H1 (cell line): ENCODE measurements at regions of chr19 and their contacts with region 1.

Region 1: DNA sequence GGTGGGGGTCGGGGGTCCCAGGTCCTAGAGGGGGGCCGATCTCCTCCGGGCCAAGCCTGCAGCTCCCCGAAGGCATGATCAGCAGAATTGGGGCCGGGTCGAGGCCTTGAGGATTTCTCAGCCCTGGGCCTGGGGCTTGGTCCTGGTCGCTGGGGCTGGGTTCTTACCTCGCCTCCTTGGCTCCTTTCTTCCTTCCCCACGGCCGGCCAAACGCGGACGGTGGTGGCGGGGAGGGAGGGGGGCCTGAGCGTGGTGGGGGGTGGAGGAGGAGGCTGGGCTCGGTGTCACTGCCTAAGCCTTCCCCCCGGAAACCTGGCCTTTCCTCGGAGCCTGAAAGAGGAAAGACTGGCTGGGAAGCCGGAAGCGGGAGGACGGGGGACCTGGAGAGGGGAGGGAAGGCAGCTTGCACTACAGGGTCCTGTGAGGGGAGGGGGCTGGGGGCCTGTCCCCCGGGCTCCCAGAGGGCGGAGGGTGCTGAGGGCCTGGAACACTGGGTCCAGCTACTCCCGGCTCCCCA is at the start of gene ZNF579:
- DNase-seq: peak in 1 of 2 experiments; percentile 90
- H3K4me3 ChIP-seq: peak within 1 kb of the TSS; percentile 73 to 92 (median 74)
- H3K27ac ChIP-seq: peak within 1 kb of the TSS; percentile 81; the same call in 1 of the 2 replicates
- H3K4me1 ChIP-seq: peaks cover 0 to 2% (median 0%) of the 10 kb centered on the region in 4 experiments; a peak in 3 of 7 replicates
- H3K27me3 ChIP-seq: no peaks in the 10 kb centered on the region
- CTCF ChIP-seq: no peak
- EP300 ChIP-seq: peak in 1 of 2 experiments; percentile 74; a peak in 1 of 3 replicates
- POLR2A ChIP-seq: no peak
- RAD21 ChIP-seq: no peak
- total RNA-seq, gene ZNF579: 18.9 and 19.0 TPM in 2 replicates

Region 2: DNA sequence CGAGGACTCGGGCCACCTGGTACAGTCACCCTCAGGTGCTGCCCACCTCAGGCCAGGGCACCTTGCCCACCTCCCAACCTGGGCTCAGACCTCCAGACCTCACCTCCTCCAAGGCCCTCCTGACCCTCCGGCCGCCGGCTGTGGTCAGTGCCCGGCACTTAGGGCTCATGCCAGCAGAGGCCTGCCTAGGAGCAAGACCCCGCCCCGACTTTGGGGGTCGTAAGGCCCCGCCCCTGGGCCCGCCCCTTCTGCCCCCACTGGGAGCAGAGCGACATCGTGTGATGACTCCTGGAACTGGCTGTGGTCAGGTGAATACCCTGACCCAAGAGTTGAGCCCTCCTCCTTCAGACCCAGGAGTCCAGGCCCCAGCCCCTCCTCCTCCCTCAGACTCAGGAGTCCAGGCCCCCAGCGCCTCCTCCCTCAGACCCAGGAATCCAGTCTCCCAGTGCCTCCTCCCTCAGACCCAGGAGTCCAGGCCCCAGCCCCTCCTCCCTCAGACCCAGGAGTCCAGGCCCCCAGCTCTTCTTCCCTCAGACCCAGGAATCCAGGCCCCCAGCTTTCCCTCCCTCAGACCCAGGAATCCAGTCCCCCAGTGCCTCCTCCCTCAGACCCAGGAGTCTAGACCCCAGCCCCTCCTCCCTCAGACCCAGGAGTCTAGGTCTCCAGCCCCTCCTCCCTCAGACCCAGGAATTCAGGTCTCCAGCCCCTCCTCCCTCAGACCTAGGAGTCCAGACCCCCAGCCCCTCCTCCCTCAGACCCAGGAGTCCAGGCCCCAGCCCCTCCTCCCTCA is 43.5 kb before region 1 on chr19 and contains the start of gene SBK2:
- CTCF ChIA-PET with region 1: no interaction called
- POLR2A ChIA-PET with region 1: no interaction called
- DNase-seq: peak; percentile 62 to 98
- H3K4me3 ChIP-seq: peak within 1 kb of the TSS; percentile 12 to 58 (median 29); a peak in 5 of 8 replicates
- H3K27ac ChIP-seq: peak within 1 kb of the TSS; percentile 51; the same call in 1 of the 2 replicates
- H3K4me1 ChIP-seq: peaks cover 0 to 17% (median 5%) of the 10 kb centered on the region in 4 experiments; a peak in 4 of 7 replicates
- H3K27me3 ChIP-seq: no peaks in the 10 kb centered on the region; a peak in 2 of 7 replicates
- CTCF ChIP-seq: peak; percentile 75 to 88 (median 84)
- EP300 ChIP-seq: no peak
- POLR2A ChIP-seq: 0 out of 3 replicates have a peak, but pooled peaks of 1 of the 2 experiments have one; percentile 21
- RAD21 ChIP-seq: peak; percentile 86 to 88
- total RNA-seq, gene SBK2: 3.9 and 4.1 TPM in 2 replicates

Region 3: DNA sequence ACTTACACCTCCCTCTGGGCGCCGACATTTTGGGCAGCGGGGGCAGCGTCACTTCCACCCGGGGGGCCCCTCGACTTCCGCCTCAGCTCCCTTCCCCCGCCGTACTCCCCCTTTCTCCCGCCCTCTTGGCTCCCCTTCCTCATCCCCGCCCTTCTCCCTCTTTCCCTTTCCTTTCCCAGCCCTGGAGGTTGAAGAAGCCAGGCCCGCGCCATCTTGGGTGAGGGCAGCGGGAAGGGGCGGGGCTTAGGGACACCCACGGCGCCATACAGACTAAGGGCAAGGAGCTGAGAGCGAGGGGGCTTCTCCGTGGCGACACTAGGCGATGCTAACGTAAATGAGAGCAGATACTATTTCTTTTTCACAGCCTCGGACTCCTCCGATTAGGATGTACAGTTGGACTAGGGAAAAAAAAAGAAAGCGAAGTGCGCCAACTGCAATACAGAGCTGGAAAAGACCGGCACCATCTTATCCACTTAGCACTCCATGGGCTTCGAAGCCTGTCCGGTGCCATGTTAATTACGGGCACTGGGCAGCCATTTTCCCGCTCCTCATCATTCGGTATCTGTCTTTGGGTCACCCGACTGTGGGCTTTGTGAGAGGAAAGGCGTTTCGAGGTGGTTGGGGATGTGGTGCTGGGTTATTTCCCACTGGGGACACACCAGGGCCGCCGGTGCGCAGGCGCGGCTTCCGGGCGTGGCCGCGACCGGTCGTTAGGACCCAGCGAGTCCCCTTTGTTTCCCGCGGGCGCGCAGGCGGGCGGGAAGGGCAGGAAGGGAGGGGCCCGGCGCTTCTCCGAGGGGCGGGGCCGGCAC is 19.0 kb after region 1 on chr19 and contains the start of gene FIZ1:
- CTCF ChIA-PET with region 1: interaction called, 3 read pairs
- POLR2A ChIA-PET with region 1: interaction called, 42 read pairs
- DNase-seq: peak; percentile 93 to 97
- H3K4me3 ChIP-seq: peak within 1 kb of the TSS; percentile 78 to 95 (median 86)
- H3K27ac ChIP-seq: peak within 1 kb of the TSS; percentile 100
- H3K4me1 ChIP-seq: peaks cover 0 to 14% (median 7%) of the 10 kb centered on the region in 4 experiments; a peak in 5 of 7 replicates
- H3K27me3 ChIP-seq: no peaks in the 10 kb centered on the region
- CTCF ChIP-seq: no peak
- EP300 ChIP-seq: 0 out of 3 replicates have a peak, but pooled peaks of 1 of the 2 experiments have one; percentile 41
- POLR2A ChIP-seq: peak in 1 of 2 experiments; percentile 81; a peak in 2 of 3 replicates
- RAD21 ChIP-seq: no peak
- total RNA-seq, gene FIZ1: 17.6 and 18.5 TPM in 2 replicates

Region 4: DNA sequence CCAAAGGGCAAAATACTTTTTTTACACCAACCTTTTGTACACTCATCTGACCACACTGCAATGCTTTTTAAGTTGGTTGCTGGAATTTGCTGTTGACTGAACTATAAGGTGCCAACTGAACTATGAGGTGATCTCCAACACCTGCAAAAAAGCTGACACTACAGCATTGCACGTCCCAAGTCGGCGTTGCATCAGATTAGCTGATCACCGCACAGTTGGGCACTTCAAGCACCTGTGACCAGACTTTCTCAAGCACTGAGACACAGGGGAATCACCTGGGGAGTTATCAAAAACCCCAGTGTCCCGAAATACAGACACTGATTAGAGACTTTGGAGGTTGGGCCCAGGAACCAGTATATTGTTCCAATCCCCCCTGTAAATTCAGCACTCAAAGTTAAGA is 250.0 kb after region 1 on chr19:
- CTCF ChIA-PET with region 1: no interaction called
- POLR2A ChIA-PET with region 1: no interaction called
- DNase-seq: no peak
- H3K4me3 ChIP-seq: no peak overlapping the region
- H3K27ac ChIP-seq: no peak overlapping the region
- H3K4me1 ChIP-seq: no peaks in the 10 kb centered on the region
- H3K27me3 ChIP-seq: no peaks in the 10 kb centered on the region
- CTCF ChIP-seq: no peak
- EP300 ChIP-seq: no peak
- POLR2A ChIP-seq: no peak
- RAD21 ChIP-seq: no peak